Right cardiac atrium (tissue), 5 donors: ENCODE measurements at regions of chr16 and their contacts with region 1.

Region 1: DNA sequence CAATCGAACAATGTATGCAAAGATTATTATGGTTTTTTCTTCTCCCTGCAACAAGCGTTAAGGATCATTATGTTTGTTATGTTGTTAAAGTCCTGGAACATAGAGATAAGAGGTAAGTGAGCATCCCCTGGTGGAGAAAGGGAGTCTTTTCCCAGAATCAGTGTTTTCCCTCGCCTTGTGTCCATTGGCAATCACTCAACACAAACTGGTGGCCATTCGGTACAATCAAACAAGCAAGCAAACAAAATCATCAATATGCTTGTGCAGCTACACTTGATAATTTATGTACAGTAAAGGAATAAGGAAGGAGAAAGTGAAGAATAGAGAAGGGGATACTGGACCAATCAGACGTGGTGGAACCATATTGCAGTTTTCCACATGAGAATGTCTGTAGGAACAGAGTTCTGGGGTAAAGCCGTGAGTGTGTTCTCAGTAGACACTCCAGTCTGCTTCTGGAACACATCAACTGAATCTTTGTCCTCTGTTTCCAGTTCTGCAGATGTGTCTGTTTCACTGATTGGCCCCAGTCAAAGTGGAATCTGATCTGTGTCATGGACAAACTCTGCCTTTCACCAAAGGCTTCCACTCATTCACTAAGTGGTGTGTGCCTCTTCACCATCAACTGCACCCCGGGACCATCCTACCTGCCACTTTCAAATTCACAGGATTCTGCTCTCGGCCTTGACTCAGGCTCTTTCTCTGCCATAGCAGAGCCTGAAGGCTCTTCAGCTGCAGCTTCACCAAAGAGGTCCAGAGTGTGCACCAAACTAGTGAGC is 169.5 kb downstream of the AHSP start:
- DNase-seq: no peak
- ATAC-seq: no peak
- H3K4me3 ChIP-seq: no peak overlapping the region
- H3K27ac ChIP-seq: no peak overlapping the region
- H3K4me1 ChIP-seq: no peaks in the 10 kb centered on the region
- H3K27me3 ChIP-seq: no peaks in the 10 kb centered on the region

Region 2: DNA sequence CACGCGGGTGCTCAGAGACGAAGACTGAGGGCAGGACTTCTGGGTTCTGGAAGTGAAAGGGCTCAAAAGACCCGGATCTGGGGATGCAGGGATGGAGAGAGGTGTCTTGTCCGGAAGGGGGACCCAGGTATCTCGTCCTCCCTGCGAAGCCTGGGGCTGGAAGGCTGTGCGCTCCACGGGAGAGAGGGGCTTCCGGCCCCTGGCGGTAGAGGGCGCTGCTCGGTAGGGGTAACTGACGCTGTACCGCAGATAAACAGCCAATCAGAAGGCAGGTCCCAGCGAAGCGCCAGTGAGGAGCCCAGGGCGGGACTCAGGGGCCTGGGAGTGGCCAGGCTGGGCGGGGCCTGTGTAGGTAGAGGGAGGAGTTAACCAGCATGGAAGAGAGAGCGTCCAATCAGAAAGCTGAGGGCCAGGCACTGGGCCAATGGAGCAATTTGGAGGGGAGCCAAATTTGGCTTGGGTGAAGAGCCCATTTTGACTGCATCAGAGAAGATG is 224.4 kb before region 1 on chr16:
- intact Hi-C with region 1: loop called in 1 of 4 experiments (anchors 10 kb)
- DNase-seq: peak; percentile 94 to 97 (median 96)
- ATAC-seq: peak; percentile 91 to 93
- H3K4me3 ChIP-seq: peak overlapping the region; percentile 80
- H3K27ac ChIP-seq: peak overlapping the region; percentile 98
- H3K4me1 ChIP-seq: peaks cover 5% of the 10 kb centered on the region
- H3K27me3 ChIP-seq: no peaks in the 10 kb centered on the region

Region 3: GRCh38 chr16:31734265-31734664 is 37.1 kb after region 1 on chr16:
- intact Hi-C with region 1: no loop called
- DNase-seq: no peak
- ATAC-seq: no peak
- H3K4me3 ChIP-seq: no peak overlapping the region
- H3K27ac ChIP-seq: no peak overlapping the region
- H3K4me1 ChIP-seq: no peaks in the 10 kb centered on the region
- H3K27me3 ChIP-seq: no peaks in the 10 kb centered on the region